Mucosa of descending colon (tissue), 3 donors: ENCODE measurements at regions of chr1 and their contacts with region 1.

Region 1: GRCh38 chr1:147545133-147545532 is 3.8 kb downstream of the BCL9 start:
- DNase-seq: peak; percentile 55 to 77 (median 56)
- ATAC-seq: peak; percentile 60
- H3K4me3 ChIP-seq: no peak overlapping the region
- H3K4me1 ChIP-seq: peaks cover 27% of the 10 kb centered on the region
- CTCF ChIP-seq: no peak

Region 2: DNA sequence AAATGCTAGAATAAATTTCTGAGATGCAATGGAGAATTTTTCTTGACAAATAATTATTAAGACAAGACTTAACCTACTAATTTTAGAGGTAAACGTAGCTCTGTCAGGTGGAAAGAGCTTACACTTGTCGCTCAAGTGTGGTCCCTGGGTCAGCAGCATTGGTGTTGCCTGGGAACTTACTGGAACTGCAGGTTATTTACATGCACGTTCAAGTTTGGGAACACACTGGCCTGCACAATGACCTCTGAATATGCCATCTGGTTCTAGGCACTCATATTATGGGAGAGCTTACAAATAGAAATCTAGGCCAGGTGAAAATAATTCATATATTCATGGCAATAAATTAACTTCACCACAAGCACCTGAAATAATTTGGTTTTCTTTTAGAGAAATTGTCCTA is 92.3 kb before region 1 on chr1:
- intact Hi-C with region 1: no loop called
- DNase-seq: no peak
- ATAC-seq: no peak
- H3K4me3 ChIP-seq: no peak overlapping the region
- H3K4me1 ChIP-seq: no peaks in the 10 kb centered on the region
- CTCF ChIP-seq: no peak

Region 3: GRCh38 chr1:147599362-147600118 is 54.4 kb after region 1 on chr1:
- intact Hi-C with region 1: loop called in 1 of 2 experiments (anchors 10 kb)
- DNase-seq: peak; percentile 98 to 99 (median 99)
- ATAC-seq: peak; percentile 94
- H3K4me3 ChIP-seq: peak overlapping the region; percentile 57
- H3K4me1 ChIP-seq: no peaks in the 10 kb centered on the region
- CTCF ChIP-seq: no peak

Region 4: GRCh38 chr1:147683163-147683763 is 138.1 kb after region 1 on chr1:
- intact Hi-C with region 1: no loop called
- DNase-seq: no peak
- ATAC-seq: no peak
- H3K4me3 ChIP-seq: no peak overlapping the region
- H3K4me1 ChIP-seq: no peaks in the 10 kb centered on the region
- CTCF ChIP-seq: no peak